ENCODE measurements at regions of chr5 and their contacts with region 1.

Region 1: GRCh38 chr5:163408311-163408923 is 29.0 kb upstream of the CCNG1 start:
- DNase-seq: peak; percentile 73
- H3K4me3 ChIP-seq: peak overlapping the region in 1 of 2 experiments; percentile 40; a peak in 1 of 4 replicates
- H3K27ac ChIP-seq: no peak overlapping the region
- H3K4me1 ChIP-seq: no peaks in the 10 kb centered on the region; a peak in 1 of 4 replicates
- H3K27me3 ChIP-seq: no peaks in the 10 kb centered on the region
- CTCF ChIP-seq: peak; percentile 97
- EP300 ChIP-seq: no peak
- RAD21 ChIP-seq: peak; percentile 89

Region 2: DNA sequence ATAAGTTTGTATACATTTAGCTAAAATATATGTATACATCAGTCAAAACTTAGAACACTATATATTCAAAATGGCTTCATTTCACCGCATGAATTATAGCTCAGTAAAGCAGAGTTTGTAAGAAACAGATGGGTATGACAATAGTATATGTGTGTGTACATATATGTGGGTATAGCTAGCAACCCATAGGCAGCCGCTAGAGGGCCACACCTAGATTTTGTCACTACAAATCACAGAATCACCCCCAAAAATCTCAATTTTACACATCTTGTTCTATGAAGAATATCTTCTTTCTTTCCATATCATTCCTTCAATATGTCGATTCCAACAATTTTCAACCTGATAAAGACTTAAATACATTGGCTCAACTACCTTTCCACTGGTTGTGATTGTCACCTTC is 328.8 kb before region 1 on chr5:
- CTCF ChIA-PET with region 1: interaction called, 12 read pairs
- POLR2A ChIA-PET with region 1: no interaction called
- DNase-seq: peak; percentile 1
- H3K4me3 ChIP-seq: no peak overlapping the region
- H3K27ac ChIP-seq: no peak overlapping the region
- H3K4me1 ChIP-seq: no peaks in the 10 kb centered on the region
- H3K27me3 ChIP-seq: no peaks in the 10 kb centered on the region
- CTCF ChIP-seq: peak; percentile 57
- EP300 ChIP-seq: no peak
- RAD21 ChIP-seq: peak; percentile 19; the same call in 1 of the 2 replicates

Region 3: GRCh38 chr5:163347671-163348070 is 60.7 kb before region 1 on chr5:
- CTCF ChIA-PET with region 1: interaction called, 68 read pairs
- POLR2A ChIA-PET with region 1: no interaction called
- DNase-seq: peak; percentile 65
- H3K4me3 ChIP-seq: peak overlapping the region in 1 of 2 experiments; percentile 25; a peak in 1 of 4 replicates
- H3K27ac ChIP-seq: no peak overlapping the region
- H3K4me1 ChIP-seq: peaks cover 0 to 4% of the 10 kb centered on the region in 2 experiments; a peak in 1 of 4 replicates
- H3K27me3 ChIP-seq: no peaks in the 10 kb centered on the region
- CTCF ChIP-seq: peak; percentile 96
- EP300 ChIP-seq: no peak
- RAD21 ChIP-seq: peak; percentile 94

Region 4: DNA sequence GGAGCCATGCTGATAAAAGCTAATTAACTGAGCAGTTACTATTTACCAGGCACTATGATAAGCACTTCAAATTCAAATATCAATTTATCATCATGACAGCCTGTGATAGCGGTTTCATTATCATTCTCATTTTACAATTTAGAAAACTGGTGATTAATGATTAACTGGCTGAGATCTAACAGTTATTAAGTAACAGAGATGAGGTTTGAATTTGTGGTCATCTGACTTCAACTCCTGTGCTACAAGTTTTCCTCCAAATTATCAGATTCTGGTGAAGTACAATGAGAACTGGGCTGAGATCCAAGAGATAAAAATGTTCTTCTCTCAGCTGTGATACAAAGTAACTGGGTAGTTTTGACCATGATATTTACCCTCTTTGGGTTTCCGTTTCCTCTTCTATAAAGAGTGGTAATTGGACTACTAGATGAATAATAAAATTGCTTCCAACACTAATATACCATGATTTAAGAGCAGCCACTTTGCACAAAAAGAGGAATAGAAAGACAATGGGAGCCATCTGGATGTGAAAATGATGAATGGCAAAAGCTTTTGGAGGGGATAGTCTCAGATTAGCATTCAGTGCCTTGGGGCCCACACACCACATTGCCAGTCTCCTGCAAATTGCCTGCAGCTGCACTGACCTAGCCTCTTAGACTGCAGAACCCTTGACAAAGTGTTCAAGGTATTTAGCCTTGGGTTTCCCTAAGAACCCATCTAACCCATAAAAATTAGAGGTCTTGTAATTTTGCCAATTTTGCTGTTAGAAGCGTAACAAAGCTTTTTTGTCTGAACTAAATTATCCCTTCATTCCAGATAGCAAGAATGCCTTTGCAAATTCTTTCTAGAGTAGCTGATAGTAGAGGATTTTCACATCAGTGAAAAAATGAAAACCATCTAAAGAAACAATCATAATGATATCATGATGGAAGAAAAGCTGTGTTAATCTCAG is 45.3 kb before region 1 on chr5:
- CTCF ChIA-PET with region 1: interaction called, 13 read pairs
- POLR2A ChIA-PET with region 1: no interaction called
- DNase-seq: peak; percentile 55
- H3K4me3 ChIP-seq: no peak overlapping the region
- H3K27ac ChIP-seq: peak overlapping the region in 1 of 2 experiments; percentile 34; a peak in 1 of 4 replicates
- H3K4me1 ChIP-seq: peaks cover 0 to 3% of the 10 kb centered on the region in 2 experiments; a peak in 2 of 4 replicates
- H3K27me3 ChIP-seq: no peaks in the 10 kb centered on the region
- CTCF ChIP-seq: no peak
- EP300 ChIP-seq: peak in 1 of 2 experiments; percentile 70; a peak in 2 of 4 replicates
- RAD21 ChIP-seq: no peak

Region 5: DNA sequence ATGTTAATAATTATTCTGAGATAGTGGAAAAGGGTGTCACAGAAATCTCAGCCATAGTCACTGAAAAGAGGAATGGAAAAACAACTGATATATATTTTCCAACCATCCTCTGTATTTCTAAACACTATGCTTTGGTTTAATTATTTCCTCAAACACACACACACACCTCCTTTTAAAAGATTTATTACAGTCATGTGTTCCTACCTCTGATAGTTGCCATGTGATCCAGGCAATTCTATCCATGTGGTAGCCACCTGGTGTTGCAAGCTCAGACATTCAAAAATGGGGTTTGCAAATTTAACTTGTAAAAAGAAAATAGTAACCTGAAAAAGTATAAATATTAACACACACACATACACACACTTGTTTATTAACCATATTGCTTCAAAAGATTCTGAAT is 11.1 kb before region 1 on chr5:
- CTCF ChIA-PET with region 1: interaction called, 38 read pairs
- POLR2A ChIA-PET with region 1: no interaction called
- DNase-seq: no peak
- H3K4me3 ChIP-seq: no peak overlapping the region
- H3K27ac ChIP-seq: no peak overlapping the region
- H3K4me1 ChIP-seq: peaks cover 0 to 5% of the 10 kb centered on the region in 2 experiments; a peak in 1 of 4 replicates
- H3K27me3 ChIP-seq: no peaks in the 10 kb centered on the region
- CTCF ChIP-seq: no peak
- EP300 ChIP-seq: no peak
- RAD21 ChIP-seq: no peak

Region 6: DNA sequence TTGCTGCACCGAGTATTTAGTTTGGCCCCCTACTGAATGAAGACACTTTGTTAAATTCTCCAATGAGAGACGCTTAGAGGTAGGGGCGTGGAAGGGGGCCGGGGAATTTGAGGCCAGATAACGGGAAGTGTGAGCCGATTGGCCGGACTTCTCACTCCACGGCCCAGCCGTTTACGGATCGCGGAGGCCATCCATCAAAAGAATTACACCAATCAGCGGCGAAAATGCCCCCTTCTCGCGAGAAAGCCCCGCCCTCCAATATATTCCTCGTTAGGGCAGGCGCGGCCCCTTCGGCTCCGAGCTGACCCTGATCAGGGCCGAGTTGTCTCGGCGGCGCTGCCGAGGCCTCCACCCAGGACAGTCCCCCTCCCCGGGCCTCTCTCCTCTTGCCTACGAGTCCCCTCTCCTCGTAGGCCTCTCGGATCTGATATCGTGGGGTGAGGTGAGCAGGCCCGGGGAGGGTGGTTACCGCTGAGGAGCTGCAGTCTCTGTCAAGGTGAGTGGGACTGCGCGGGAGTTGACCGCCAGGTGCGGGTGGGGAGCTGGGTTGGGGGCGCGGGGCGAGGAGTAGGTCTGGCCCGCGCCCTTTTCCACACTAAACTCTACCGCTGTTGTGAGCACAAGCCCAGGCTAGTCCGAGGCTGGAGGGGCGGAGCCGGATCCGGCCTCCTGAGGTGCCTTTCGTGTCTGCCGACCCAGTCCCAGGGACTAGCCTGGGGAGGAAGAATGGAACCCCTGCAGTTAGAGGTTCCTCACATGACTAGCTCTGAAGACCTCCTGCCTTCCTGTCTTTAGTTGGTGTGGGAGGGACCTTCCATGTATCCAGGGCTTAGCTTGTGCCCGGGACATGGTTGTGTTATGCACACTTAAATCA is 29.1 kb after region 1 on chr5 and contains the start of gene CCNG1:
- CTCF ChIA-PET with region 1: interaction called, 21 read pairs
- POLR2A ChIA-PET with region 1: interaction called, 3 read pairs
- DNase-seq: peak; percentile 93
- H3K4me3 ChIP-seq: peak within 1 kb of the TSS; percentile 91 to 98
- H3K27ac ChIP-seq: peak within 1 kb of the TSS; percentile 76 to 95
- H3K4me1 ChIP-seq: peaks cover 12 to 24% of the 10 kb centered on the region in 2 experiments; a peak in 3 of 4 replicates
- H3K27me3 ChIP-seq: no peaks in the 10 kb centered on the region
- CTCF ChIP-seq: no peak
- EP300 ChIP-seq: no peak
- RAD21 ChIP-seq: no peak
- polyA plus RNA-seq, gene CCNG1: 49.0 and 62.0 TPM in 2 replicates

Region 7: DNA sequence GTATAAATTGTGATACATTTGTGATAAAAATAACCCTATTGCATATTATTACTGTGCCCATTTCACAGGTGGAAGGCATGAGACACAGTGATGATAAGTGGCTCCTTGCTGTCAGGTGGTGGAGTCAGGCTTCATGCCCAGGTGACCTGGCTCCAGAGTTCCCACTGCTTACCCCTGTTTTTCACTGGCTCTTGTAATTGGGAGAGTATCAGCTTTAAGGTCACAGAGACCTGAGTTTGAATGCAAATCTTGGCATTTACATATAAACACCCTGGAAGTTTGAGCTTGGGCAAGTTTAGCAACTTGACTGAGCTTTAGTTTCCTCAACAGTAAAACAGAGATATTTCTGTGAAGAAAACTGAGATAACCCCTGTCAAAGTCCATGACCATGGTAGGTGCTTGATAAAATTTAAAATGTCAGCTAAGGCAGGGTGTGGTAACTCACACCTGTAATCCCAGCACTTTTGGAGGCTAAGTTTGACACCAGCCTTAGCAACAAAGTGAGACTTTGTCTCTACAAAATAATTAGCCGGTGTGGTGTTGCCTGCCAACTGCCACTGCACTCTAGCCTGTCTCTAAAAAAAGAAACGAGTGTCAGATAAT is 126.2 kb after region 1 on chr5:
- CTCF ChIA-PET with region 1: no interaction called
- POLR2A ChIA-PET with region 1: no interaction called
- DNase-seq: no peak
- H3K4me3 ChIP-seq: no peak overlapping the region
- H3K27ac ChIP-seq: no peak overlapping the region
- H3K4me1 ChIP-seq: peaks cover 0 to 17% of the 10 kb centered on the region in 2 experiments; a peak in 2 of 4 replicates
- H3K27me3 ChIP-seq: no peaks in the 10 kb centered on the region
- CTCF ChIP-seq: no peak
- EP300 ChIP-seq: no peak
- RAD21 ChIP-seq: no peak

Region 8: GRCh38 chr5:164097747-164098146 is 689.3 kb after region 1 on chr5:
- CTCF ChIA-PET with region 1: no interaction called
- POLR2A ChIA-PET with region 1: no interaction called
- DNase-seq: no peak
- H3K4me3 ChIP-seq: no peak overlapping the region
- H3K27ac ChIP-seq: no peak overlapping the region
- H3K4me1 ChIP-seq: no peaks in the 10 kb centered on the region
- H3K27me3 ChIP-seq: no peaks in the 10 kb centered on the region
- CTCF ChIP-seq: no peak
- EP300 ChIP-seq: peak in 1 of 2 experiments; percentile 24; a peak in 1 of 4 replicates
- RAD21 ChIP-seq: no peak

Measured in SK-N-SH (cell line).